Activated CD8-positive, alpha-beta T cell treated with anti-CD3 and anti-CD28 coated beads, Interleukin-2, amount 10 ng/mL, durations not matched to agents 7 days and 5 days (primary cell): ENCODE measurements at regions of chr14 and their contacts with region 1.

Region 1: GRCh38 chr14:73633116-73634010 is 11.4 kb upstream of the DNAL1 start:
- DNase-seq: peak; percentile 71
- ATAC-seq: peak; percentile 87
- H3K4me3 Mint-ChIP-seq: peak overlapping the region; percentile 53
- H3K27ac Mint-ChIP-seq: no peak overlapping the region
- H3K4me1 Mint-ChIP-seq: peaks cover 5% of the 10 kb centered on the region
- H3K27me3 Mint-ChIP-seq: peaks cover 8% of the 10 kb centered on the region

Region 2: DNA sequence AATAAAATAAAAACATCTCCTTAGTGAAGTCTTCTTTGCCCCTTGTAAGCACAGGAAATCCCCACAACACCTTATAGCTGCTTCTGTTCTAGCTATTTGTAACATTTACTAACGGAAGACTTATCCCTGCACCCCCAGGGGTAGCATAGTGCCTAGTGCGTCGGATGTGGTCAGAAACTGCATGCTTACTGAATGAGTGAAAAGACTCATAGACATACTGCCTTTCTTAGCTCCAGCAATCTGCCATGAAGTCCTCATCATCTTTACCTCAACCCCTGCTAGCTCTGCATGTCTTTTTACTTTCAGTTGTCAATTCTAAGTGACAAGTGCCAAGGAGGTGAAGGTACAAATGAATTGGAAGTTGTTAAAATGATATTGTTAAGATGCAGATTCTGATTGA is 129.7 kb before region 1 on chr14:
- CTCF ChIA-PET with region 1: interaction called, 51 read pairs
- POLR2A ChIA-PET with region 1: no interaction called
- DNase-seq: no peak
- ATAC-seq: no peak
- H3K4me3 Mint-ChIP-seq: no peak overlapping the region
- H3K27ac Mint-ChIP-seq: no peak overlapping the region
- H3K4me1 Mint-ChIP-seq: no peaks in the 10 kb centered on the region
- H3K27me3 Mint-ChIP-seq: no peaks in the 10 kb centered on the region

Region 3: DNA sequence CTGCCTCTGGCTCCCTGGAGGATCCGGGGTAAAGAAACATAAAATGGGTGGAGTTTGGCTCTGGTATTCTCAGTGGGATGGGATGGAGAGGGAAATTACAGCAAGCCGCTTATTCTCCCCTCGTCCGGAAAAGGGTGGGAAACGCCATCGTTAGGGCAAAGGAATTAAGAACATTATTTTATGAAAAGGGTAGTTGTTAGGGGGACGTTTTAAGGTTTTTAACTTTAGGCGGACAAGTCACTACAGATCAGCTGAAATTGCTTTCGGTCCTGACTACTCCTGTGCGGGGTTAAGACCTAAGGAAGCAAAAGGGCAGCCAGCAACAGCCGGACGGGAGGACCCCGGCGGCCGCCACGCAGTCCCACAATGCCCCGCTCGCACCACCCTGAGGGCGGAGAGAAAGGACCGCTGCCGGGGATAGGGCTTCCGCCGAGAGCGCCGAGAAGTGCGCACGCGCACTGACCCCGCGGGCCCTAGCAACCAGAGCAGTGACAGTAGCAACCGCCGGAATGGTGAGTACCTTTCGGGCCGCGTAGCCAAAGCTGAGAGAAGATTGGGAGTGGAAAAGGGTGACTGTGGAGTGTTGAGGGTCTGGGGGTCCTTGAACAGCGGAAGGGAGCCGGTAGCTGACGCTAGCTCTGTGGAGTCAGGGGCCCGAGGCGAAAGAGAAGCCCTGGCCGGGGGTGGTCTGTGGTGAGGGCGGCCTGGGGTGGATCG is 11.3 kb after region 1 on chr14 and contains the start of gene DNAL1:
- CTCF ChIA-PET with region 1: interaction called, 19 read pairs
- POLR2A ChIA-PET with region 1: no interaction called
- DNase-seq: peak; percentile 94
- ATAC-seq: peak; percentile 99
- H3K4me3 Mint-ChIP-seq: peak within 1 kb of the TSS; percentile 87
- H3K27ac Mint-ChIP-seq: peak within 1 kb of the TSS; percentile 82
- H3K4me1 Mint-ChIP-seq: peaks cover 16% of the 10 kb centered on the region
- H3K27me3 Mint-ChIP-seq: no peaks in the 10 kb centered on the region
- total RNA-seq, gene DNAL1: 5.7 to 6.3 TPM

Region 4: DNA sequence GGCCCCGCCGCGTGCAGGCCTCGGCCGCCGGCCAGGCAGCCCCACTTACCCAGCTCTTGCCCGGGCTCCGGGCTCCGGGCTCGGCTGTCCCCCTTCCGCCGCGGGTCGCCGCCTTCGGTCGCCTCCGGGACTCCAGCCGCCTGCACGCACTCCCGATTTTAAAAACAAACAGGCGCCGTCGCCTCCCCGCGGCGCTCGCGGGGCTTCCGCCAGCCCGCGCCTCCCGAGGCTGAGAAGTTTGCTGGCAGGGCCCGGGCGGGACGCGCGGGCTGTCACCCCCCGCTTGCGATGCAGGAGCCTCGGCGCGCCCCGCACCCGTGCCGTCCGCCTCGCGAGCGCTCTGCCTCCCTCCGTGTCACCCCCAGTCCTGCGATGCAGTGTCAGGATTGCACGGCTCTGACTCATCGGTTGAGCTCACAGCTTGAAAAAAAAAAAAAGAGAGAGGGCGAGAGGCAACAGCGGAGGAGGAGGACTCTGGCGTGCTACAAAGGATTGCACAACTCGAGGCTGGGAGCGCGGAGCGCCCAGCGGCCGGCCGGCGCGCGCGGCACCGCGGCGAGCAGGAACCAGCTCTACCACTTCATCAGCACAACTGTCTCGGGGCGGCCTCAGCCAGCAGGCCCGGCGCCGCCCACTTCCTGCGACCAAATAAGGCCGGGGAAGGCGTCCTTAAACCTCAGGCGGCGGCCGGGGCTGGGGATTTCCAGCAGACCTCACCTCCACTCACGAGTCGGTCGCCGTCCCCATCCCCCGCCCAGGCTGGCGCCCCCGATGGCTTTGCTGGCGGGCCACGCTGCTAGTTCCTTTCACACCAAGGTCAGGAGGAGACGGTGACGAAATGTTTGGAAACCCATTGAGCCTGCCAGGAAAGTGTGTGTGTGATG is 126.6 kb after region 1 on chr14:
- CTCF ChIA-PET with region 1: no interaction called
- POLR2A ChIA-PET with region 1: no interaction called
- DNase-seq: peak; percentile 96
- ATAC-seq: peak; percentile 86
- H3K4me3 Mint-ChIP-seq: peak overlapping the region; percentile 91
- H3K27ac Mint-ChIP-seq: peak overlapping the region; percentile 95
- H3K4me1 Mint-ChIP-seq: peaks cover 74% of the 10 kb centered on the region
- H3K27me3 Mint-ChIP-seq: no peaks in the 10 kb centered on the region

Region 5: GRCh38 chr14:73777401-73777800 is 144.0 kb after region 1 on chr14:
- CTCF ChIA-PET with region 1: no interaction called
- POLR2A ChIA-PET with region 1: no interaction called
- DNase-seq: no peak
- ATAC-seq: peak; percentile 16
- H3K4me3 Mint-ChIP-seq: no peak overlapping the region
- H3K27ac Mint-ChIP-seq: no peak overlapping the region
- H3K4me1 Mint-ChIP-seq: peaks cover 55% of the 10 kb centered on the region
- H3K27me3 Mint-ChIP-seq: no peaks in the 10 kb centered on the region